ENCODE measurements at regions of chr5 and their contacts with region 1.

Region 1: DNA sequence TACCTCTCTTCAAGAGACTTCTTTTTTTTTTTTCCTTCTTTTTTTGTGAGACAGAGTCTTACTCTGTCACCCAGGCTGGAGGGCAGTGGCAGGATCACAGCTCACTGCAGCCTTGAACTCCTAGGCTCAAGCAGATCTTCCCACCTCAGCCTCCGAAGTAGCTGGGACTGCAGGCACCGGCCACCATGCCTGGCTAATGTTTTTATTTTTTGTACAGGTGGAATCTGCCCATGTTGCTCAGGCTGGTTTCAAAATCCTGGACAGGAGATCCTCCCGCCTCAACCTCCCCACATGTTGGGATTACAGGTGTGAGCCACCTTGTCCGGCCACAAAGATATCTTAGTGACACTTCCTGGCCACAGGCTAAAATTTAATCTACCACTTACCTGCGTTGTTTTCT is 42.9 kb upstream of the F2RL1 start:
- DNase-seq: no peak
- H3K4me3 ChIP-seq: no peak overlapping the region
- H3K27ac ChIP-seq: no peak overlapping the region
- H3K4me1 ChIP-seq: peaks cover 0 to 7% (median 0%) of the 10 kb centered on the region in 4 donors
- H3K27me3 ChIP-seq: no peaks in the 10 kb centered on the region
- CTCF ChIP-seq: no peak
- EP300 ChIP-seq: no peak
- POLR2A ChIP-seq: no peak

Region 2: DNA sequence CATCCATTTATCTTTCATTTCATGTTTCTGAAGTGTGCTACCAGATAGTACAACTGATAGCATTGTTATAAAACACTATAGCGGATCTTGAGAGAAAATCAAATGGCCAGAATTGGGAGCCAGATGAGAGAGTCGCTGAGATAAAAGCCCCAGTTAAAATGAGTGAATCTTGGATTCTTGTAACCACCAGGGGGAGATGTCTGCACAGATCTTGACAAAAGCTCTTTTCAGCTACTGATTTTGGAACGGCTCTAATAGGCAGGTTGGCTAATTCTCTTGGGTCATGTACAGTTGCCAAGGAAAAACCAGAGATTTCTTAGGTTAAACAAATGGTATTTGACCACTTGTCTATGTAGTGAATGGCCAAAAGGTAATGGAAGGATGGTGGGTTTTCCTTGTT is 174.5 kb before region 1 on chr5:
- intact Hi-C with region 1: loop called (anchors 5 kb)
- DNase-seq: peak in 1 of 2 donors; percentile 80
- H3K4me3 ChIP-seq: no peak overlapping the region
- H3K27ac ChIP-seq: no peak overlapping the region
- H3K4me1 ChIP-seq: no peaks in the 10 kb centered on the region
- H3K27me3 ChIP-seq: no peaks in the 10 kb centered on the region
- CTCF ChIP-seq: peak in 5 of 7 experiments; percentile 48 to 66 (median 60)
- EP300 ChIP-seq: no peak
- POLR2A ChIP-seq: no peak

Region 3: GRCh38 chr5:76849419-76850291 is 73.7 kb after region 1 on chr5 and contains the start of gene S100Z:
- intact Hi-C with region 1: no loop called
- DNase-seq: peak in 1 of 2 donors; percentile 64
- H3K4me3 ChIP-seq: no peak within 1 kb of the TSS
- H3K27ac ChIP-seq: no peak within 1 kb of the TSS
- H3K4me1 ChIP-seq: peaks cover 0 to 28% (median 0%) of the 10 kb centered on the region in 4 donors
- H3K27me3 ChIP-seq: no peaks in the 10 kb centered on the region
- CTCF ChIP-seq: no peak
- EP300 ChIP-seq: no peak
- POLR2A ChIP-seq: no peak
- total RNA-seq, gene S100Z: 0.89 TPM in 1 of 5 donors, not detected in the others

Region 4: DNA sequence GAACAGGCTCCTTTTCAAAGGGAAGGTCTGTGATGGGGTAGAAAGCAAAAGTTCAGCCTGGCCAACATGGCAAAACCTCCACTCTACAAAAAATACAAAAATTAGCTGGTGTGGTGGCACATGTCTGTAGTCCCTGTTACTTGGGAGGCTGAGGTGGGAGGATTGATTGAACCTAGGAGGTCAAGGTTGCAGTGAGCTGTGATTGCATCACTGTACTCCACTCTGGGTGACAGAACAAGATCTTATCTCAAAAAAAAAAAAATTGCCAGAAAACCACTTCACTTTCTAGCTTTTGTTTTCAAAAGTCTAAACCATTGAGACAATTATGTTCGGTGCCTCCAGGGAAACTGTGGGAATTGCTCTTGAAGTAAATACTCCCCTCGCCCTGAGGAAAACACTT is 117.4 kb after region 1 on chr5:
- intact Hi-C with region 1: no loop called
- DNase-seq: no peak
- H3K4me3 ChIP-seq: no peak overlapping the region
- H3K27ac ChIP-seq: no peak overlapping the region
- H3K4me1 ChIP-seq: no peaks in the 10 kb centered on the region
- H3K27me3 ChIP-seq: peaks cover 0 to 3% (median 0%) of the 10 kb centered on the region in 3 donors
- CTCF ChIP-seq: no peak
- EP300 ChIP-seq: no peak
- POLR2A ChIP-seq: no peak

Measured in stomach (tissue), 19 donors.